Endothelial cell of umbilical vein (primary cell): ENCODE measurements at regions of chr1 and their contacts with region 1.

Region 1: DNA sequence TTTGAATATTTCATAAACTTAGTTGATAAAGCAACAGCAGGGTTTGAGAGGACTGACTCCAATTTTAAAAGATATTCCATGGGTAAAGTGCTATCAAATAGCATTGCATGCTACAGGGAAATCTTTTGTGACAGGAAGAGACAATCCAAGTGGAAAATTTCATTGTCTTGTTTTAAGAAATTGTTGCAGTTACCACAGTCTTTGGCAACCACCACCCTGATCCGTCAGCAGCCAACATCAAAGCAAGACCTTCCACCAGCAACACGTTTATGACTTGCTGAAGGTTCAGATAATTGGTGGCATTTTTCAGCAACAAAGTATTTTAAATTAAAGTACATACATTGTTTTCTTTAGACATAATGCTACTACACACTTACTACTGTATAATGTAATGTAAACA is 47.8 kb downstream of the ADGRL4 start:
- DNase-seq: no peak
- H3K4me3 ChIP-seq: no peak overlapping the region
- H3K27ac ChIP-seq: no peak overlapping the region
- H3K4me1 ChIP-seq: no peaks in the 10 kb centered on the region
- H3K27me3 ChIP-seq: no peaks in the 10 kb centered on the region
- CTCF ChIP-seq: no peak
- POLR2A ChIP-seq: no peak

Region 2: DNA sequence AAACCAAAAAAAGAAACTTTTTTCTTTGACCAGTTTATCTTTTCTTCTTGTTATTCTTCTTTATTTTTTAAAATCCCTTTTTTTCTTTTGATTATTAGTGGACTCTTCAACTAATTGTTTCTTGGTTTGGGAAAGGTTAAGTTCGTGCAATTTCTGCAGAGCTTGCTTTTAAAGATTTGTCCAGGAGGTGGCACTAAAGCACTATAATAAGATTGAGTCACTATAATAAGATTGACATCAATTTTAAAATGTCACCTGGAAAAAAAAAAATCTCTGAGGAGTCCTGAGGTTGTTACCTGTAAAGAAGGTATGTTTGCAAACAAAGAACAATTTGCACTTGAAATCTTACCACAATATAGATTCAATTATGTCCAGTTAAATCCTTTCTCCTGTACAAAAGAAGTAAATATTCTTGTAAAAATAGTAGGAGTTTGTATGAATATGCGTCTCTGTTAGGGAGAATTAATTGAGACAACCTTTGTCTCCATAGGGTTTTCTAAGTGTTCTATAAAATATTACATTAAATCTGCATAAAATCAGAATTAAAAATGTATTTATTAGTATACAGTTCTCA is 118.9 kb before region 1 on chr1:
- CTCF ChIA-PET with region 1: no interaction called
- POLR2A ChIA-PET with region 1: no interaction called
- dilution Hi-C with region 1: no loop called
- intact Hi-C with region 1: no loop called
- DNase-seq: peak; percentile 69
- H3K4me3 ChIP-seq: no peak overlapping the region
- H3K27ac ChIP-seq: no peak overlapping the region
- H3K4me1 ChIP-seq: peaks cover 2% of the 10 kb centered on the region
- H3K27me3 ChIP-seq: no peaks in the 10 kb centered on the region
- CTCF ChIP-seq: peak; percentile 38 to 42
- POLR2A ChIP-seq: no peak

Region 3: GRCh38 chr1:78980511-78980910 is 21.8 kb after region 1 on chr1:
- CTCF ChIA-PET with region 1: interaction called, 3 read pairs
- POLR2A ChIA-PET with region 1: no interaction called
- dilution Hi-C with region 1: no loop called
- intact Hi-C with region 1: loop called (anchors 2 kb)
- DNase-seq: peak; percentile 27
- H3K4me3 ChIP-seq: no peak overlapping the region
- H3K27ac ChIP-seq: no peak overlapping the region
- H3K4me1 ChIP-seq: peaks cover 4% of the 10 kb centered on the region
- H3K27me3 ChIP-seq: no peaks in the 10 kb centered on the region
- CTCF ChIP-seq: no peak
- POLR2A ChIP-seq: no peak

Region 4: GRCh38 chr1:78996791-78997190 is 38.1 kb after region 1 on chr1:
- CTCF ChIA-PET with region 1: no interaction called
- POLR2A ChIA-PET with region 1: no interaction called
- dilution Hi-C with region 1: no loop called
- intact Hi-C with region 1: no loop called
- DNase-seq: no peak
- H3K4me3 ChIP-seq: no peak overlapping the region
- H3K27ac ChIP-seq: no peak overlapping the region
- H3K4me1 ChIP-seq: peaks cover 8% of the 10 kb centered on the region
- H3K27me3 ChIP-seq: no peaks in the 10 kb centered on the region
- CTCF ChIP-seq: no peak
- POLR2A ChIP-seq: no peak